Endothelial cell of umbilical vein (primary cell): ENCODE measurements at regions of chr6 and their contacts with region 1.

Region 1: GRCh38 chr6:38806271-38806670 is 91.2 kb downstream of the DNAH8 start:
- DNase-seq: no peak
- H3K4me3 ChIP-seq: no peak overlapping the region
- H3K27ac ChIP-seq: no peak overlapping the region
- H3K4me1 ChIP-seq: peaks cover 23% of the 10 kb centered on the region
- H3K27me3 ChIP-seq: no peaks in the 10 kb centered on the region
- CTCF ChIP-seq: no peak
- POLR2A ChIP-seq: no peak

Region 2: DNA sequence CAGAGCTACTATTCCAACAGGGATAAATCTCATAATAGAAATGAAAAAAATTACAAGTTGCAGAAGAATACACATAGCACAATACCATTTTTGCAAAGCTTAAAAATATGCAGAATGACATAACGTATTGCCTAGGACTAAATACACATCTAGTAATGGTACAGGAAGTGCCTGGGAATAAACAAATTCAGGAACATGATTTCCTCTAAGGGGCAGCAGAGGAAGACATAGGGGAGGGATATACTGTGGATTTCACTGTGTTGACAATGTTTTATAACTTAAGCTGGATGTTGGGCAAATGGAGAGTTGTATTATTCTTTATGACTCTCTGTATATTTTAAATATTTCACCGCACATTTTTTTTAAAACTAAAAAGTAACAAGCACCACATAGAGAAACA is 97.8 kb before region 1 on chr6:
- CTCF ChIA-PET with region 1: interaction called, 12 read pairs
- POLR2A ChIA-PET with region 1: no interaction called
- dilution Hi-C with region 1: no loop called
- intact Hi-C with region 1: no loop called
- DNase-seq: peak; percentile 71
- H3K4me3 ChIP-seq: no peak overlapping the region
- H3K27ac ChIP-seq: no peak overlapping the region
- H3K4me1 ChIP-seq: peaks cover 11% of the 10 kb centered on the region
- H3K27me3 ChIP-seq: no peaks in the 10 kb centered on the region
- CTCF ChIP-seq: no peak
- POLR2A ChIP-seq: no peak

Region 3: GRCh38 chr6:38720295-38720694 is 86.0 kb before region 1 on chr6:
- CTCF ChIA-PET with region 1: interaction called, 16 read pairs
- POLR2A ChIA-PET with region 1: no interaction called
- dilution Hi-C with region 1: no loop called
- intact Hi-C with region 1: no loop called
- DNase-seq: peak; percentile 49
- H3K4me3 ChIP-seq: no peak overlapping the region
- H3K27ac ChIP-seq: no peak overlapping the region
- H3K4me1 ChIP-seq: peaks cover 12% of the 10 kb centered on the region
- H3K27me3 ChIP-seq: no peaks in the 10 kb centered on the region
- CTCF ChIP-seq: peak; percentile 14 to 20
- POLR2A ChIP-seq: no peak

Region 4: DNA sequence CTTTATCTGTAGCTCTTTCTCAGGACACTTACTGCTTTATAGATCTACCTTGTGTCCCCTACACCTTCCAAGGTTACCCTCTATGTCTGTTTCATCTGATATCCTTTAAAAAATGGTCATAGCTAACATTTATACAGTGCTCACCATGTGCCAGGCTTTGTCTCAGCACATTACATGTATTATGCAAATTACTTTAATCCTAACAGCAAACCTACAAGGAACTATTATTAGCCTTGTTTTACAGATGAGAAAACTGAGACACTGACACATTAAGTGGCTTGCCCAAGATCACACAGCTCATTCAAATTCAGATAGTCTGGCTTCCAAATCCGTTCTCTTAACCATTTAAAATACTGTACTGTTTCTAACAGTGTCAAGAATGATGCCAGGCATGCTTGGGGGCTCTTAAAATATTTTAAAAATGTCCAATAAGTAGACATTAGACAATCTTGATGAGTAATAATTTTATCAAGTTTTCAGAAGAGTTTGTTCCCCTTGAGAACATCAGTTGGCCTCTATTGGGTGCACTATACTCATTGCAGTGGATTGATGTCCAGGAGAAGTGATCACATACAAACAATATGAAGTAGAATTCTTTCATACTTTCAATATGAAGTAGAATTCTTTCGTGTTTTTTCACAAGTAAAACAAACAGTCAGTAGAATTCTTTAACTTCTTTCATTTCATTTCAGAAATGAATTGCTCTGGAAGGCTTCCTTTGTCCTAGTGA is 21.6 kb before region 1 on chr6:
- CTCF ChIA-PET with region 1: interaction called, 16 read pairs
- POLR2A ChIA-PET with region 1: no interaction called
- dilution Hi-C with region 1: no loop called
- intact Hi-C with region 1: no loop called
- DNase-seq: peak; percentile 16
- H3K4me3 ChIP-seq: no peak overlapping the region
- H3K27ac ChIP-seq: no peak overlapping the region
- H3K4me1 ChIP-seq: peaks cover 44% of the 10 kb centered on the region
- H3K27me3 ChIP-seq: no peaks in the 10 kb centered on the region
- CTCF ChIP-seq: no peak
- POLR2A ChIP-seq: no peak